Mammary epithelial cell (primary cell): ENCODE measurements at regions of chr3 and their contacts with region 1.

Region 1: DNA sequence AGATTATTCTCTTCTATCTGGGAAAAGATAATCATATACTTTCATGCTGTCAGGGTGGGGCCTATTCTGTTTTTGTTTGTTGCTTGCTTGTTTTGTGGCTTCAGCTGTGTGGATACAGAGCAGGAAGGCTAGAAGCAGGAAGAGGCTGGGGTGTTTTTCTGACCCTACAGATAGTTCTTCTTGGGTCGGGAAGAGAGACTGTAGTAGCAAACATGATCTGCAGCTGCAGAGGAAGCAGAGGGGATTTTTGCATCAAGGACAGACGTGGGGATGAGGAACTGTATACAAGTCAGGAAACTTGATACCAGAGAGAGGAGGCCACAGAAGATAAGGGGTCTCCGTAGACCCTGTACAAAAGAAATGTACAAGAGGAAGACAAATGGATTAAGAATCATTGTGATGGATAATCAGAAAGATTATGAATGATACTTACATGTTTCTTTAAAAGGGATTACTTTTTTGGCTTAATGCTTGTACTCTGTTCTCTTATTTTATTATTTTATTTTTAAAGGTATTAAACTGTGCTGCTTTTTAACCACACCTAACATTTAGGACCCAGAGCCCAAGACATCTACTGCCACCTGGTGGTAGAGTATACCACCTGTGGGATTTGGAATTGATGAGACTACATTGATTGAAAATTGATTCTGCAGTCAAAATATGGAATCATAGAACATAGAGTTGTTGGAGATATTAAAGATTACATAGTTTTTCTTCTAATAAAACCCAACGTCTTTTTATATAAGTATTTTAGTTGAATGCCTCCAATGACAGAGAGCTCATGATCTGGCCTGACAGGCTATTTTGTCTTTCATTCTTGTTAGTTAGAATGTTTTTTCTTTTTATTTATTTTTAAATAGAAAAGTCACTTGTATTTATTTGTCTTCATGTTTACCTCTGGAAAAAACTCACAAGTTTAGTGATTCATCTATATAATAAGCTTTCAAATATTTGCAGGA is 87.3 kb upstream of the ROPN1 start:
- DNase-seq: peak; percentile 9
- H3K4me3 ChIP-seq: no peak overlapping the region
- H3K27ac ChIP-seq: no peak overlapping the region
- H3K4me1 ChIP-seq: no peaks in the 10 kb centered on the region
- H3K27me3 ChIP-seq: no peaks in the 10 kb centered on the region
- CTCF ChIP-seq: peak; percentile 67 to 79

Region 2: DNA sequence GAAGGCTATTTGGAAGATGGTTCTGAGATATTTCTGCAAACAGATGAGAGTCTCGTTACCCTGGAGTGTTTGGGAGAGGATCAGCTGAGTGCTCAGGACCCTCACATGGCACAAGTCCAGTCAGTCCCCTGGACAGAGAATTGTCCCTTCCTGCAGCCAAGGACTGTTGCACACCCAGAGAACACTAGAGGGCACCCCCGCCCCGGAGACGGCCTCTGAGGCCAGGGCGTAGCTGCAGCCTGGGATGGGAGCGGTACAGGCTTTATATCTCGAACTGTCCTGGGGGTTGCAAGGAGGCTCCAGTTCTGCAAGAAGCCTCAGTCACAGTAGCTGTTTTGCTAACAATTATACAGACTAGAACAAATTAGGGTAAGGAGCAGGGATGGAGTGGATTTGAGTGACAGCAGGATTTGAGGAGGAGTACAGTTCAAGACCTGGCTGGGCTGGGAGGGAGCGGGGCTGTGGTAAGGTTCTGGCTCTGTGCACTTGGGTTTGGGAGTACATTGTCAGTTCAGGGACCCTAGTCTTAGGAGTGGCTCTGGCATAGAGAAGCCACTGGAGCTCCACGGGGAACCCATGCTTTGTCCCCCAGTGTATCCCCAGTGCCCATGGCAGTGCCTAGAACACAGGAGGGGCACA is 426.8 kb before region 1 on chr3:
- CTCF ChIA-PET with region 1: interaction called, 3 read pairs
- dilution Hi-C with region 1: no loop called
- in situ Hi-C with region 1: no loop called
- intact Hi-C with region 1: loop called (anchors 1 kb)
- DNase-seq: peak; percentile 35
- H3K4me3 ChIP-seq: no peak overlapping the region
- H3K27ac ChIP-seq: no peak overlapping the region
- H3K4me1 ChIP-seq: peaks cover 14% of the 10 kb centered on the region
- H3K27me3 ChIP-seq: no peaks in the 10 kb centered on the region
- CTCF ChIP-seq: peak; percentile 73 to 90

Region 3: DNA sequence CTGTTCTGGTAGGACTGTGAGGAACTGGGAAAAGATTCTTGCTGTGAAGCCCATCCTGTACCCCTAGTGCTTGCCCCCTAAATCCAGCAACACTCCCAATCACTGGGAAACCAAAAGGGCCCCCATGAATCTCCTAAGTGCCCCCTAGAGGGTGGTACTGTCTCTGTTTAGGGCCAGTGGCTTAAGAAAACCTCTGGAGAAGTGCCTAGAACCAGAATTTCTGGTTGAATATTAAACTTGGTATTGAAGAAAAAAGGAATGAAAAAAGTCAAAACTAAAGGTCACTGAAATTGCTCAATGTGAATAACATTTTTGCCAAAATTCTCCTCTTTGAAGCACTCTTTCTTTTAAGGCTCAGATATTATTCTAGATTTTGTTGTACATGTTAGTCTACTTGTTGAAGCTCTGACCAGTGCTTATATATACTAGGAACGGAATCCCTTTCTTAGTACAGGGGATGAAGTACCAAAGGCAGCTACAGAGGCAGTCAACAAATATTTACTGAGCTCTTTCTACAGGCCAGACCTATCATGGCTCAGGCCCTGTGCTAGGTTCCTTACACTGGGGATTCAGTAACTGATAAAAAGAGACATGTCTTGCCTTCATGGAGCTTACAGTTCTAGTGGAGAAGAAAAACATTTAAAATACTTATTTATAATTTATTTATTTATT is 333.9 kb before region 1 on chr3:
- CTCF ChIA-PET with region 1: no interaction called
- dilution Hi-C with region 1: no loop called
- in situ Hi-C with region 1: no loop called
- intact Hi-C with region 1: loop called (anchors 10 kb)
- DNase-seq: no peak
- H3K4me3 ChIP-seq: no peak overlapping the region
- H3K27ac ChIP-seq: no peak overlapping the region
- H3K4me1 ChIP-seq: peaks cover 28% of the 10 kb centered on the region
- H3K27me3 ChIP-seq: no peaks in the 10 kb centered on the region
- CTCF ChIP-seq: peak; percentile 16 to 31

Region 4: DNA sequence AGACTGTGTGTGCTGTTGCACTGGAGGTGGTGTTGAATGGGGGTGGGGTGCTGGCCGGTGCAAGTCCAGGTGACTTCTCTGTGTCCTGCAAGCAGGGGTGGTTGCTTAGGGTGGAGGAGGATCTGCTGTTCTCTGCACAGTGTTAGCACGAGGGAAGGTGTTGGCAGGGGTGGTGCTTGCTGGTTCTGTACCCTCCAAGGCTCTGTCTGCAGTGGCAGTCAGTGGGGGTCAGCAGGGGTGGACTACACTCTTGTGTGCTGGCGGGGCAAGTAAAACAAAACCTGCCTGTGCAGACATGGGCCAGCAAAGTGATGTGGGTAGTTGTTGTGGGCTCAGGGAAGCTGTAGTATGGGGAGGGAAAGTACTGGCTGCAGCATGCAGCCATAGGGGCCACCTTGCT is 92.8 kb before region 1 on chr3:
- CTCF ChIA-PET with region 1: no interaction called
- dilution Hi-C with region 1: no loop called
- in situ Hi-C with region 1: no loop called
- intact Hi-C with region 1: no loop called
- DNase-seq: no peak
- H3K4me3 ChIP-seq: no peak overlapping the region
- H3K27ac ChIP-seq: no peak overlapping the region
- H3K4me1 ChIP-seq: no peaks in the 10 kb centered on the region
- H3K27me3 ChIP-seq: peaks cover 10% of the 10 kb centered on the region
- CTCF ChIP-seq: no peak

Region 5: DNA sequence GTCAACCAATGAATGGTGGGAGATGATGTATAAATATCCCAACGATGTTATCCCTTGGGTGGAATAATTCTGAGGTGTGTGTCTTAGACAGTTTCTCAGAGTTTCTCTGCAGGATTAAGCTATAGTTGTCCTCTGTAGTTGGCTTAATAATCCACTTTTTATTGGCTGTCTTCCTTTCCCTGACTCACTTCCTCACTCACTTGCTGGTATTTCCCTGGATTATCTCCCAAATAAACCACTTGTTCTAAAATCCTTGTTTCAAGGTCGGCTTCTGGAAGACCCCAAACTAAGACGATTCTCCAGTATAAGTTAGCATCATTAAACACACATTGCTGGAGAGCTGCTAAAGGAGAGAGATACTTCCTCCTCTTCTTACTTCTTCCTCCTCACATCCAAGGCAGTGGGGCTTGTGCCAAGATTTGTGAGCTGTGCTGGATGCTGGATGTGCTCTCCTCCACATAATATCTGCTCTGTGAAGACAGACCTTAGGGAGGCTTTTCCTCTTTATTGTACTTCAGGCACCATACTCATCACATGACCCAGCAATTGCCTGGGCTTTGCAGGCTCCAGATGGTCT is 64.8 kb before region 1 on chr3:
- CTCF ChIA-PET with region 1: interaction called, 3 read pairs
- dilution Hi-C with region 1: no loop called
- in situ Hi-C with region 1: no loop called
- intact Hi-C with region 1: loop called (anchors 1 kb)
- DNase-seq: no peak
- H3K4me3 ChIP-seq: no peak overlapping the region
- H3K27ac ChIP-seq: no peak overlapping the region
- H3K4me1 ChIP-seq: no peaks in the 10 kb centered on the region
- H3K27me3 ChIP-seq: peaks cover 5% of the 10 kb centered on the region
- CTCF ChIP-seq: no peak

Region 6: DNA sequence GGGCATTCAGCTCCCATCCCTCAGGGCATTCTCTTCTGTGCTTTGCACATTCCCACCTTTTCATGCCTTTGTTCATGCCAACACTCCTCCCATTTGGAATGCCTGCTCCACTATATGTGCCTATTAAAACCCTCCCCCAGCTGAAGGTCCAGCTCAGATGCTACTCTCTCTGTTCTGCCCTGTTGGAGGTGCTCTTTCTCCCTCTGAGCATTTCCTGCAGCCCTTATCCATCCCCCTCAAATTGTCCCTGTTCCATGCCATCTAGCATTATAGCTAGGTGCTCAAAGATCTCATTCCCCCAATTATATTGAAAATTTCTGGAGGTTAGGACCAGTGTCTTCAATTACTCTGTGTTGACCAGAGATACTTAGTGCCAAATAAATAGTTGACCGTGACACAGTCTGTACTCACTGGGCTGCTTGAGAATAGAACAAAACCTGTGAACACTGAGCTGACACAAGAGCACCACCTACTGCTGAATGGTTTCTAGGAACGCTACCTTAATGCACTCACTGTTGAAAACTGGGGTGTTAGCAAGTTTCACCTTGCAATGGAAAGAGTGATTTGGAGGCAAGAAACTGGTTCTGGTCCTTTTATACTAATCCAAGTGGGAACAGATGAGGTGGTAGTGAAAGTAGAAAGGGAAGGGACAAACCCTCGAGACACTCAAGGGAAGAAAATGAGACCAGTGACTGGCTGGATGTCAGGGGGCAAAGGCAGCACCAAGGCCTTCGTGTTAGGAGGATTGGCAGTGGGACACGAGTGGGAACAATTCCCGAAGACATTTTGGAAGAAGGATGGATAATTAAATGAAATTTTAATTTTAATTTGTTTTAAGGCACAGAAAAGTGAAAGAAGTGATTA is 202.5 kb after region 1 on chr3:
- CTCF ChIA-PET with region 1: no interaction called
- dilution Hi-C with region 1: no loop called
- in situ Hi-C with region 1: no loop called
- intact Hi-C with region 1: loop called (anchors 1 kb)
- DNase-seq: peak; percentile 41
- H3K4me3 ChIP-seq: no peak overlapping the region
- H3K27ac ChIP-seq: no peak overlapping the region
- H3K4me1 ChIP-seq: peaks cover 9% of the 10 kb centered on the region
- H3K27me3 ChIP-seq: no peaks in the 10 kb centered on the region
- CTCF ChIP-seq: peak; percentile 66 to 77